ENCODE measurements at regions of chr6 and their contacts with region 1.

Region 1: DNA sequence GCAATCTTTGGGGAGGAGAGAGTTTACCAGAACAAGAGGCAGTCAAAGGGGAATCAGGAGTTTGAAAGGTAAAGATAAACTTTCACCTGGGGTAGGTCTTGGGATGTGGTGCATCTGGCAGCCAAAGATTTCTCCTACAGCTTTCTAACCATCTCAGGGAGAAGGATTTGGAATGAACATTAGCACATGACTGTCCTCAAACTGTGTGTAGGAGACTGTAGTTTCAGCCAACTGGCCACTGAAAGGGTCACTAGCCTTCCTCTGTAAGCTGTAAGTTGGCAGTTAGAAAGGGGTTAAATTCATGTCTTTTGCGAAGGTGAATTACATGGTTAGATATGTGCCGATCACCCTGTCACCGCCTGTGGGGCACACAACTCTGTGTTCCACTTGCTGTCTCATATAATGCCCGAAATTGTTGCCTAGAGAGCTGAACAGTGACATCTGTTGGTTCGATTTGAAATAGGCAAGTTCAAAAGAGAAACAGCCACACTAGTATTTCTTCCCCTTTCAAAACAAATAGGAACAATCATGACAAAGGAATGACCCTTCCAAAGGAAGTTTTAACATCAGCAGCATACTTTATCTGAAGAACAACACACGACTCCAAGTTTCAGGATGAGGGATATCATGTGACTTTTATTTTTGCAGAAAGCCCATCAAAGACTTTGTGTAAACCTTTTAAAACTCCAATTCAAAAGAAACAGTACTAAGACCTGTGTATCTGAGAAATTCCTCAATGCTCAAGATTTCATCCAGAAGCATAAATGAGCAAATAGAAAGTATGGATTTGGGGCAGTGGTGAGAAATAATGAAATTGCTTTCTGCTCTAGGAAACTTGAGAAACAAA is 1.1 kb upstream of the OPN5 start:
- DNase-seq: peak in 4 of 5 donors; percentile 3 to 47 (median 27)
- H3K4me3 ChIP-seq: no peak overlapping the region
- H3K4me3 Mint-ChIP-seq: peak overlapping the region in 2 of 7 donors; percentile 2 to 32
- H3K27ac ChIP-seq: no peak overlapping the region
- H3K27ac Mint-ChIP-seq: peak overlapping the region in 4 of 8 donors; percentile 2 to 18 (median 6)
- H3K4me1 ChIP-seq: no peaks in the 10 kb centered on the region
- H3K4me1 Mint-ChIP-seq: peaks cover 5 to 10% (median 8%) of the 10 kb centered on the region in 3 donors
- H3K27me3 ChIP-seq: no peaks in the 10 kb centered on the region
- H3K27me3 Mint-ChIP-seq: peaks cover 3 to 12% of the 10 kb centered on the region in 2 donors

Region 2: DNA sequence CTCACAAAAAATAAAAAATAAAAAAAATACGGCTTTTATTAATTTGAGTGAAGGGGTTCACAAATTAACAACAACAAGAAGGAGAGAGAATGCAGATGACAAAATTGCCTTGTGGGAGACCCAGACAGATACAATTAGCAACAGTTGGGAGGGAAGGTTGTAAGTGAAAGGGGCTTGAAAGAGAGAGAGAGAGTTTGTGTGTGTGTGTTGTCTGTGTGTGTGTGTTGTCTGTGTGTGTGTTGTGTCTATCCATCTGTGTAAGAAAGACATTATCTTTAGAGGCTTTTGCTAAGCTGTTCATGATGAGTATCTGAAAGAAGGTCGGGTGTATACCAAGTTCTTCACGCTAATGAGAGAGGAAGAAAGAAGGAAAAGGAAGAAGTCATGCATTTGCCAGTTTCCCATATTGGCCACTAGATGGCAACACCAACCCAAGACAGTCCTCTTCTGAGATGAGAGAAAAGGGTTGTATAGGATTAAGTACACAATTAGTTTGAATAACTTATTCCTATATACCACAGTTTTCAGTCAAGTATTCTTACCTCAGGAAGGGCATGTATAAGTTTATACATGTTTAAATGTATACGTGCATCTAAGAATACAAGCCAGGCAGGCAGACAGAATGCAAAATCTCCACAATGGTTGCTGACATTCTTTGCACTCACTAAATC is 366.8 kb before region 1 on chr6:
- CTCF ChIA-PET with region 1: interaction called, 25 read pairs
- POLR2A ChIA-PET with region 1: no interaction called
- DNase-seq: peak in 4 of 5 donors; percentile 15 to 59 (median 54)
- H3K4me3 ChIP-seq: peak overlapping the region; percentile 55
- H3K4me3 Mint-ChIP-seq: peak overlapping the region; percentile 76 to 89 (median 82)
- H3K27ac ChIP-seq: peak overlapping the region; percentile 25
- H3K27ac Mint-ChIP-seq: peak overlapping the region in 7 of 8 donors; percentile 1 to 82 (median 50)
- H3K4me1 ChIP-seq: peaks cover 4% of the 10 kb centered on the region
- H3K4me1 Mint-ChIP-seq: peaks cover 18 to 21% (median 20%) of the 10 kb centered on the region in 3 donors
- H3K27me3 ChIP-seq: no peaks in the 10 kb centered on the region
- H3K27me3 Mint-ChIP-seq: no peaks in the 10 kb centered on the region

Region 3: GRCh38 chr6:47595797-47596196 is 184.9 kb before region 1 on chr6:
- CTCF ChIA-PET with region 1: no interaction called
- POLR2A ChIA-PET with region 1: no interaction called
- DNase-seq: no peak
- H3K4me3 ChIP-seq: no peak overlapping the region
- H3K4me3 Mint-ChIP-seq: no peak overlapping the region
- H3K27ac ChIP-seq: no peak overlapping the region
- H3K27ac Mint-ChIP-seq: peak overlapping the region in 1 of 8 donors; percentile 23
- H3K4me1 ChIP-seq: no peaks in the 10 kb centered on the region
- H3K4me1 Mint-ChIP-seq: peaks cover 4 to 13% (median 12%) of the 10 kb centered on the region in 3 donors
- H3K27me3 ChIP-seq: no peaks in the 10 kb centered on the region
- H3K27me3 Mint-ChIP-seq: no peaks in the 10 kb centered on the region

Region 4: DNA sequence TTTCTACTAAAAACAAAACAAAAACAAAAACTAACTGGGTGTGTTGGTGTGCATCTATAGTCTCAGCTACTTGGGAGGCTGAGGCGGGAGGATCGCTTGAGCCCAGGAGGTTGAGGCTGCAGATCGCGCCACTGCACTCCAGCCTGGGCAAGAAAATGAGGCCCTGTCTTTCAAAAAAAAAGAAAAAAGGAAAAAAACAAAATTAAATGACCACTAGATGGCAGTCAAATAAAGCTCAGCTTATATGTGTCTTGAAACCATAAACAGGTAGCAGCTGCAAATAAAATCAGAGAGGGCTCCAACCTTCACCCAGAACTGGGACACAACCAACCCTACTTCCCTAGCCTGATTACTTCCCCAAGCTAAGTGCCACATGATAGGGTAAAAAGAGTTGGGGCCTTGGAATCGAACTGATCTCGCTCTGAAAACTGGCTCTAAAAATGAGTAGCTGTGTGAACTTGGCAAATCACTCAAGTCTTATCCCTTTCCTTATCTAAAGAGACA is 149.4 kb before region 1 on chr6:
- CTCF ChIA-PET with region 1: interaction called, 18 read pairs
- POLR2A ChIA-PET with region 1: no interaction called
- DNase-seq: peak in 2 of 5 donors; percentile 27 to 42
- H3K4me3 ChIP-seq: no peak overlapping the region
- H3K4me3 Mint-ChIP-seq: peak overlapping the region in 1 of 7 donors; percentile 19
- H3K27ac ChIP-seq: no peak overlapping the region
- H3K27ac Mint-ChIP-seq: peak overlapping the region in 5 of 8 donors; percentile 6 to 51 (median 17)
- H3K4me1 ChIP-seq: peaks cover 7% of the 10 kb centered on the region
- H3K4me1 Mint-ChIP-seq: peaks cover 12 to 14% (median 13%) of the 10 kb centered on the region in 3 donors
- H3K27me3 ChIP-seq: no peaks in the 10 kb centered on the region
- H3K27me3 Mint-ChIP-seq: no peaks in the 10 kb centered on the region

Region 5: DNA sequence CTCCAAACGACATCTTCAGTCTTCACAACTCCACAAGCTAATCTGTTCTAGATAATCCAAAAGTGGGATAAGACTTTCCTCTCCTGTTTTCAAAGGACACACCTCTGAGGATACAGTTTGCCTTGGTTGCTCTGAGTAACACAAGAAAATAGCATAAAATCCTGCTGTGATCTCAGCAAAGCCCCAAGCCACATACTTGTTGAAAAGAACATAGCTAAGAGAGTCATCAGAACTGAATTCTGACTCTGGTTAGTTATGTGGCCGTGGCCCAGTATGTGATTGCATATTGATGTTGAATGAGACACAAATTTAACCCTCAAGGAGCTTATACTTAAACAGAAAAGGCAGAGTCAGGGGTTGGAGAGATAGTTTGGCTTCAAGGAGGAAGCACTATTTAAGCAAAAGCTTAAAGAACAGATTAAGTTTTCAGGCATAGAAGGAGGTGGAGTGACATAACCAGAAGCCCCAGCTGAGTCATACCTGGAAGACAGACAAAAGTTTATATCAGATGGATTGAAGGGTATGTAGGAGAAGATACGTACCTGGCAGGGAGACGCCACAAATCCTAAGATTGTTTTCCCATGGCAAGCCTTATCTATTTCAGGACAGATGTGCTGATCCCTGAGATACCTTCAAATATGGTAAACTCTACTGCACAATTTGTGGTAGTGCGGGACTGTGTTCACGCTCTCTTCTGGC is 42.3 kb after region 1 on chr6:
- CTCF ChIA-PET with region 1: no interaction called
- POLR2A ChIA-PET with region 1: no interaction called
- DNase-seq: no peak
- H3K4me3 ChIP-seq: no peak overlapping the region
- H3K4me3 Mint-ChIP-seq: no peak overlapping the region
- H3K27ac ChIP-seq: no peak overlapping the region
- H3K27ac Mint-ChIP-seq: no peak overlapping the region
- H3K4me1 ChIP-seq: no peaks in the 10 kb centered on the region
- H3K4me1 Mint-ChIP-seq: no peaks in the 10 kb centered on the region
- H3K27me3 ChIP-seq: no peaks in the 10 kb centered on the region
- H3K27me3 Mint-ChIP-seq: peaks cover 4 to 27% of the 10 kb centered on the region in 2 donors

Measured in CD8-positive, alpha-beta memory T cell (primary cell).